Adrenal gland (tissue), 19 donors: ENCODE measurements at regions of chr4 and their contacts with region 1.

Region 1: GRCh38 chr4:52712172-52712990 is 38.8 kb downstream of the ERVMER34-1 start:
- DNase-seq: peak; percentile 99 to 100 (median 99)
- H3K4me3 ChIP-seq: peak overlapping the region; percentile 72 to 89 (median 82)
- H3K27ac ChIP-seq: peak overlapping the region; percentile 87 to 99 (median 96)
- H3K4me1 ChIP-seq: peaks cover 16 to 25% of the 10 kb centered on the region in 2 donors
- H3K27me3 ChIP-seq: no peaks in the 10 kb centered on the region
- CTCF ChIP-seq: no peak
- POLR2A ChIP-seq: peak; percentile 94 to 97

Region 2: GRCh38 chr4:52529983-52530382 is 182.4 kb before region 1 on chr4:
- intact Hi-C with region 1: no loop called
- DNase-seq: no peak
- H3K4me3 ChIP-seq: no peak overlapping the region
- H3K27ac ChIP-seq: no peak overlapping the region
- H3K4me1 ChIP-seq: no peaks in the 10 kb centered on the region
- H3K27me3 ChIP-seq: no peaks in the 10 kb centered on the region
- CTCF ChIP-seq: no peak
- POLR2A ChIP-seq: no peak

Region 3: DNA sequence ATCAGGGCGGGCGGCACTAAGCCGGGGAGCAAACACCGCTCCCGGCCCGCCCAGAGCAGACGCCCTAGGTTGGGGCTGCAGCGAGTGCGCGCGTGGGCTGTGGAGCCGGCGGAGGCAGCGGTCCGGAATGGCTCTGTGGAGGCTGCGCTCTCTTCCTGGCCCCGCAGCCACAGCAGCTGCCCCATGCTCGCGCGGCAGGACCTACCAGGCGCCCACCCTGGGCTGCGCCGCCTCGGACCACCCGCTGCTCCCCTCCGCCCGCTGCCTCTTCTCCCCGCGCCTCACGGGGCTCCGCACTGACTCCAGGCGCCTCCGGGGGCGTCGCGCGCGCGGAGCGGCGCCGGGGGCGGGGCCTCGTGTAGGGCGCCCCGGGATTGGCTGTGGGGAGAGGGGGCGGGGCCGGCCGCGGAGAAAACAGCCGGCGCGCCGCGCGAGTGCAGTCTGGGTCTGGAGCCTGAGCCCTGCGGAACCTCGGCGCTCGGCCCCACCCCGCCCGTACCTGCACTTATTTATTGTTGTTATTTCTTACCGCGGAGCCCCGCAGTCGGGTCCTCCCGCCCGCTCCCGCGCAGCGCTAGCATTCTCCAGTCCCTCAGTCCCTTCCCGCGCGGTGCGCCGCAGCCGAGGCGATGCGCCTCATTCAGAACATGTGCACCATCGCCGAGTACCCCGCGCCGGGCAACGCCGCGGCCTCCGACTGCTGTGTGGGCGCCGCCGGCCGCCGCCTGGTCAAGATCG is 149.7 kb after region 1 on chr4 and contains the start of gene RASL11B:
- intact Hi-C with region 1: loop called in 1 of 2 experiments (anchors 10 kb)
- DNase-seq: peak; percentile 78 to 89 (median 83)
- H3K4me3 ChIP-seq: peak within 1 kb of the TSS in 2 of 4 donors; percentile 74 to 84
- H3K27ac ChIP-seq: peak within 1 kb of the TSS in 1 of 5 donors; percentile 54
- H3K4me1 ChIP-seq: peaks cover 12 to 14% of the 10 kb centered on the region in 2 donors
- H3K27me3 ChIP-seq: no peaks in the 10 kb centered on the region
- CTCF ChIP-seq: peak in 3 of 6 experiments; percentile 17 to 50 (median 36)
- POLR2A ChIP-seq: peak in 1 of 2 donors; percentile 72
- total RNA-seq, gene RASL11B: 1.3 to 11.0 (median 4.1) TPM

Region 4: GRCh38 chr4:53039741-53040458 is 327.5 kb after region 1 on chr4:
- intact Hi-C with region 1: no loop called
- DNase-seq: no peak
- H3K4me3 ChIP-seq: no peak overlapping the region
- H3K27ac ChIP-seq: no peak overlapping the region
- H3K4me1 ChIP-seq: no peaks in the 10 kb centered on the region
- H3K27me3 ChIP-seq: no peaks in the 10 kb centered on the region
- CTCF ChIP-seq: no peak
- POLR2A ChIP-seq: no peak